AG04450 (cell line): ENCODE measurements at regions of chr22 and their contacts with region 1.

Region 1: DNA sequence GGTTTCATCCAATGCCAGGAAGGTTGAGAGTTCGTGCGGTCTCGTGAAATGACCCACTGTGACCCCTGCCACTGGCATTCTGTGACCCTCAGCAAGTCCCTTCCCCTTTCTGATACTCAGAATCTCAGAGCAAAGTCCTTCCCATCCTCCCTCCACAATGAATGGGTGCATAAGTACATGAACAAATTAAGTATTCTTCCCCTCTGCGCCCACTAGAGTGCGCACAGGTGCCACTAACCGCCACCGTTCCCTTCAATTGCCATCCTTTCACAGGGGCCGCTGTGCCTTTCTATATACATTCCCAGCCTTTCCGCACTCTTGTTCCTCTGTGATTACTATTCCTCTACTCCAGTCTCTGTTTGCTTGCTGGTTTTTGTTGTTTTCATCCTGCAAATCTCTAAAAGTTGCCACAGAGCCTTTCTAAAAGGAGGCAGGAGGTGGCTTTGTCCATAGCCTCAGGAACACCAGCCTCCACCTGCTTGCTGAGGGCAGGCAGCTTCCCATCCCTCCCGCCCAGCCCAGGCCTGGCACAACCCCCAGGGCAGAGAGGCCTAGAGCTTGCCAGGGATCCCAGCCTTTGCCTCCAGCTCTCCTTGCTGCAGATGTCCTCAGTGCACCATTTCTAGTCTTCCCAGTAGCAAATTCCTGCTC is 6.7 kb upstream of the AP1B1 start:
- DNase-seq: peak; percentile 46
- H3K4me3 ChIP-seq: no peak overlapping the region
- H3K27ac ChIP-seq: no peak overlapping the region
- H3K27me3 ChIP-seq: peaks cover 12% of the 10 kb centered on the region
- CTCF ChIP-seq: peak; percentile 90

Region 2: GRCh38 chr22:29315286-29316131 is 79.5 kb before region 1 on chr22 and contains the start of gene RASL10A:
- CTCF ChIA-PET with region 1: no interaction called
- POLR2A ChIA-PET with region 1: no interaction called
- DNase-seq: no peak
- H3K4me3 ChIP-seq: no peak within 1 kb of the TSS; the same call in 1 of the 2 replicates
- H3K27ac ChIP-seq: no peak within 1 kb of the TSS
- H3K27me3 ChIP-seq: peaks cover 36% of the 10 kb centered on the region
- CTCF ChIP-seq: no peak
- polyA plus RNA-seq, gene RASL10A: not detected in 2 replicates

Region 3: DNA sequence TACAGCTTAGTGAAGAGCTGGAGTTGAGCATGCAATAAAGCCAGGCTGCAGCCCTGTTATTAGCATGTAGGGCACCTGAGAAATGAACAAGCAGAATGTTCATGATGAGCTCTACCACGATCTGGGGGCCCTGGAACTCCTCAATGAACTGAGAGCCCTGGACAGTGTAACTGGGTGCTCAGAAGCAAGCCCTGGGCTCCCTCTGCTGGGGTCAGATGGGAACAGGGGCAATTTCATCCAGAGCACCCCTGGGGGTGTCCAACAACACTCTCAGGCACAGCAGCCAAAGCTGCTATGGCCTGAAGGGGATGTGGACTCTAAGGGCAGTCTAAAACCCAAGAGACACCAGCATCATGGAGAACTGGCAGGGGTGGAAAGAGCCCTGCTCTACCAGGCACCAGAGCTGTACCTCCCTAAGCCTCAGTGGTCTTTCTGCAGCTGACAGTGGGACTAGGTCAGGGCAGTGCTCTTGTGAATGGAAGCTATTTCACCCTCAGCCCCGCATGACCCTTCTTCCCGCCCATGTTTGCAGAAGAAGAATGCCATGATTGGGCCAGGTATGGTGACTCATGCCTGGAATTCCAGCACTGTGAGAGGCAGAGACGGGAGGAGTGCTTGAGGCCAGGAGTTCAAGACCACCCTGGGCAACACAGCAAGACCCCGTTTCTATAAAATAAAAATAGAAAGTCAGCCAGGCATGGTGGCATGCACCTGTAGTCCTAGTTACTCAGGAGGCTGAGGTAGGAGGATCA is 129.6 kb after region 1 on chr22:
- CTCF ChIA-PET with region 1: interaction called, 25 read pairs
- POLR2A ChIA-PET with region 1: no interaction called
- DNase-seq: no peak
- H3K4me3 ChIP-seq: no peak overlapping the region
- H3K27ac ChIP-seq: no peak overlapping the region
- H3K27me3 ChIP-seq: no peaks in the 10 kb centered on the region
- CTCF ChIP-seq: peak; percentile 44